GM13976 (cell line): ENCODE measurements at regions of chr6 and their contacts with region 1.

Region 1: GRCh38 chr6:27518881-27519795 is 46.2 kb upstream of the ZNF184 start:
- DNase-seq: peak; percentile 75
- CTCF ChIP-seq: peak; percentile 61

Region 2: GRCh38 chr6:27177485-27178406 is 341.4 kb before region 1 on chr6:
- in situ Hi-C with region 1: loop called (anchors 25 kb)
- DNase-seq: peak; percentile 78
- CTCF ChIP-seq: peak; percentile 56

Region 3: DNA sequence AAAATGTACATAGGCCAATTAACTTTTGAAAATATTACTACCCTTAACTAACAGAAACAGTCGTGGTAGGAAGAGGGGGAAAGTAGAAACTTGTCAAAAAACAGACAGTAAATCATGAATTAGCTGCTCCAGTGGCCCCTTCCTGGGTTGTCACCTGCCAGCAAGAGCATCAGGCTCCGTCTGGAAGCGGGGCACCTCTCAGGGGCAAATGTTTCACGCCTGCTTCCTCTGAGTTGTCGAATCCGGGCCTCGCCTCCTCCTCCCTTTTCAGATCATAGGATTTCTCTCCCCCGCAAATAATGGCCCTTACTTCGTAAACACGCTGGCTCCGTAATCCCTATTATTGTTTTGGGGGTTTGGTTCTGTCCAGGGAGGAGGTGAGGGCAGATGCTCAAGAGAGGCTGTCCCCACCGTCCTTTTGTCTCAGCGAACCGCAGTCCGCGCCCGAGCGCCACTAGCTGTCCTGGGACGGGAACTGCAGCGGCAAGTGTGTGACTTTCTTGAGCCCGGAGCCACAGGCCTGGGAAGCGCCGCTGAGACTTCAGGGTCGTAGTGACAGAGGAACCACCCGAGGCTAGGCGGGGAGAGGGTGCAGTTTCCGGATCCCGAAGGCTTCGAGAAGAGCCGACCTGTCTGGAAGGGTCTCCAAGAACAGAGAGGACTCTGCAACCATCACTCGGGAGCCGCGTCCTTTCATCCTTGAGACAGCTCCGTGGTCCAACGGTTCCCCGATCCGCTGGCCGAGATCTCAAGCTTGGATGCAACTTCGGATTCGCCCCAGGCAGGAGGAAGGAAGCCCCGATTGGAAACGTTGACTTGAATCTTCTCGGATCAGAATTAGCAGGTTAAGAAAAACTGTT is 168.2 kb after region 1 on chr6:
- in situ Hi-C with region 1: no loop called
- DNase-seq: peak; percentile 86
- CTCF ChIP-seq: peak; percentile 94

Region 4: GRCh38 chr6:27753668-27754407 is 234.7 kb after region 1 on chr6:
- in situ Hi-C with region 1: loop called (anchors 10 kb)
- DNase-seq: peak; percentile 71
- CTCF ChIP-seq: no peak